Activated CD4-positive, alpha-beta T cell treated with anti-CD3 and anti-CD28 coated beads, Interleukin-2, amount 10 ng/mL, durations not matched to agents 7 days and 5 days (primary cell): ENCODE measurements at regions of chr17 and their contacts with region 1.

Region 1: GRCh38 chr17:28644985-28645939 is at the start of gene BLTP2:
- DNase-seq: peak; percentile 97
- H3K4me3 Mint-ChIP-seq: peak within 1 kb of the TSS; percentile 90
- H3K27ac Mint-ChIP-seq: peak within 1 kb of the TSS; percentile 94
- H3K4me1 Mint-ChIP-seq: peaks cover 39% of the 10 kb centered on the region
- H3K27me3 Mint-ChIP-seq: no peaks in the 10 kb centered on the region
- total RNA-seq, gene BLTP2: 144 to 145 TPM

Region 2: GRCh38 chr17:28484296-28484695 is 161.0 kb before region 1 on chr17:
- CTCF ChIA-PET with region 1: no interaction called
- POLR2A ChIA-PET with region 1: no interaction called
- DNase-seq: no peak
- H3K4me3 Mint-ChIP-seq: no peak overlapping the region
- H3K27ac Mint-ChIP-seq: no peak overlapping the region
- H3K4me1 Mint-ChIP-seq: peaks cover 9% of the 10 kb centered on the region
- H3K27me3 Mint-ChIP-seq: no peaks in the 10 kb centered on the region

Region 3: GRCh38 chr17:28634206-28634856 is 10.9 kb before region 1 on chr17:
- CTCF ChIA-PET with region 1: interaction called, 21 read pairs
- POLR2A ChIA-PET with region 1: no interaction called
- DNase-seq: no peak
- H3K4me3 Mint-ChIP-seq: no peak overlapping the region
- H3K27ac Mint-ChIP-seq: no peak overlapping the region
- H3K4me1 Mint-ChIP-seq: peaks cover 13% of the 10 kb centered on the region
- H3K27me3 Mint-ChIP-seq: no peaks in the 10 kb centered on the region

Region 4: GRCh38 chr17:28661635-28662537 is 16.6 kb after region 1 on chr17 and contains the starts of genes SDF2 and SUPT6H:
- CTCF ChIA-PET with region 1: interaction called, 18 read pairs
- POLR2A ChIA-PET with region 1: interaction called, 8 read pairs
- DNase-seq: peak; percentile 95
- H3K4me3 Mint-ChIP-seq: peak within 1 kb of the TSS; percentile 98
- H3K27ac Mint-ChIP-seq: peak within 1 kb of the TSS; percentile 99
- H3K4me1 Mint-ChIP-seq: peaks cover 53% of the 10 kb centered on the region
- H3K27me3 Mint-ChIP-seq: no peaks in the 10 kb centered on the region
- total RNA-seq, gene SDF2: 43.9 to 53.2 TPM
- total RNA-seq, gene SUPT6H: 78.4 to 78.7 TPM